BJ (cell line): ENCODE measurements at regions of chr10 and their contacts with region 1.

Region 1: GRCh38 chr10:29304264-29305030 is 15.6 kb downstream of the LYZL1 start:
- DNase-seq: peak; percentile 14
- H3K4me3 ChIP-seq: no peak overlapping the region
- H3K27me3 ChIP-seq: no peaks in the 10 kb centered on the region; the same call in 1 of the 2 replicates
- CTCF ChIP-seq: peak; percentile 76

Region 2: GRCh38 chr10:28628184-28628893 is 676.1 kb before region 1 on chr10:
- CTCF ChIA-PET with region 1: interaction called, 13 read pairs
- POLR2A ChIA-PET with region 1: no interaction called
- DNase-seq: no peak
- H3K4me3 ChIP-seq: no peak overlapping the region
- H3K27me3 ChIP-seq: peaks cover 6% of the 10 kb centered on the region
- CTCF ChIP-seq: peak; percentile 94

Region 3: DNA sequence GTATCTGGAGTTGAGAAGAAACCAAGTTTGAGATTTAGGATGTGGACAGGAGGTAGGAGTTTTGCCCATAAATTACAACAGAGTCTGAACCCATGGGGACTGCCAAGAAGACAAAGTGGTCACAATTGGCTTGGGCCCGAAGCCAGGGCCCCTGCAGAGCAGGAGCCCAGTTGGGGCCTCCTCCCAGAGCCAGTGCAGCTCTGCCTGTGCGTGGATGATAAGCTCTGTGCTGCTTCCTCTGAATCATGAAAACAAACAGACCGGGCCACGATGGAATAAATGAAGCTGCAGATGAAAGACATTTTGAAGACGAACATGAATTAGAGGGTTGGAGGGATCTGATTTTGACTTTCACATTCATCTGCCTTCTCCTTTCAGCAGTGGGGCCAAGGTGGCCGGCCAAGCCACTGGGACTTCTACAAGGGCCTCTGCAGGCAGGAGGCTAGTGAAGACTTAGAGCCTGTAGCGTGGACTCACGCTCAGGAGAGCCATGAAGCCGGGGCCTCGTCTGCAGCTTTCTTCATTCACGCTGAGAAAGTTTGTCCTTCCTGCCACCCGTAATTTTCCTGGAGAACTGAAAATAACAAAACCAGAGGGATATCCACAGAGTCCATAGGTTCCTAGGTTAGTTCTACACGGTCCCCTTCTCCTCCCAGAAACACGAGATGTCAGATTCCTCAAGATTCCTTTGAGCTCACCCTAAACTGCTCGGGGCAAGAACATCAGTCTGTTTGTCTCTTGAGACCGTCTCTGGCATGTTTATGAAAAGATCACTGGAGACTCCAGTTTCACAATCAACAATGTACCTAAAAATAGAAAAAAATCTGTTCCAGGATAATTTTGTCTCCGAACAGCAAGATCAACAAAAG is 172.3 kb before region 1 on chr10:
- CTCF ChIA-PET with region 1: interaction called, 15 read pairs
- POLR2A ChIA-PET with region 1: no interaction called
- DNase-seq: peak; percentile 16
- H3K4me3 ChIP-seq: no peak overlapping the region
- H3K27me3 ChIP-seq: no peaks in the 10 kb centered on the region
- CTCF ChIP-seq: no peak

Region 4: DNA sequence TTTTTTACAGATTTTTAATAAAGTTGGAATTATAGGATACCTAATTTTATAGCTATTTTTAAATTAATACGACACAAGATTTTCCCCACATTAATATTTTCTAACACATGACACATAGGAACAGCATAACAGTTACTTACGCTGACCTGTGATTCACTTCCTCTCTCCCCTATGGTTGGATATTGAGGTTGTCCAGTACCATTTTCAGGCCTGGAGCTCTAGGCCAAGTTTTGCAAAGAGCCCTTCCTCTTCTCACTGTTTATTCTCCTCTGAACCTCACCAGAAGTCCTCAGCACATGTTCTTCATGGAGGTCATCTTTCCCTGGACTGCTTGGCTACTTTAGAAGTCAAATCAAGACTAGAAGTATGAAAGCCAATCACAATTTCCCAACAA is 12.6 kb after region 1 on chr10:
- CTCF ChIA-PET with region 1: interaction called, 11 read pairs
- POLR2A ChIA-PET with region 1: no interaction called
- DNase-seq: no peak
- H3K4me3 ChIP-seq: no peak overlapping the region
- H3K27me3 ChIP-seq: peaks cover 3% of the 10 kb centered on the region; the same call in 1 of the 2 replicates
- CTCF ChIP-seq: no peak

Region 5: GRCh38 chr10:30063099-30063498 is 758.7 kb after region 1 on chr10:
- CTCF ChIA-PET with region 1: no interaction called
- POLR2A ChIA-PET with region 1: no interaction called
- DNase-seq: no peak
- H3K4me3 ChIP-seq: no peak overlapping the region
- H3K27me3 ChIP-seq: no peaks in the 10 kb centered on the region
- CTCF ChIP-seq: no peak